Activated CD8-positive, alpha-beta T cell treated with anti-CD3 and anti-CD28 coated beads, Interleukin-2, amount 10 ng/mL, durations not matched to agents 7 days and 5 days (primary cell): ENCODE measurements at regions of chr17 and their contacts with region 1.

Region 1: DNA sequence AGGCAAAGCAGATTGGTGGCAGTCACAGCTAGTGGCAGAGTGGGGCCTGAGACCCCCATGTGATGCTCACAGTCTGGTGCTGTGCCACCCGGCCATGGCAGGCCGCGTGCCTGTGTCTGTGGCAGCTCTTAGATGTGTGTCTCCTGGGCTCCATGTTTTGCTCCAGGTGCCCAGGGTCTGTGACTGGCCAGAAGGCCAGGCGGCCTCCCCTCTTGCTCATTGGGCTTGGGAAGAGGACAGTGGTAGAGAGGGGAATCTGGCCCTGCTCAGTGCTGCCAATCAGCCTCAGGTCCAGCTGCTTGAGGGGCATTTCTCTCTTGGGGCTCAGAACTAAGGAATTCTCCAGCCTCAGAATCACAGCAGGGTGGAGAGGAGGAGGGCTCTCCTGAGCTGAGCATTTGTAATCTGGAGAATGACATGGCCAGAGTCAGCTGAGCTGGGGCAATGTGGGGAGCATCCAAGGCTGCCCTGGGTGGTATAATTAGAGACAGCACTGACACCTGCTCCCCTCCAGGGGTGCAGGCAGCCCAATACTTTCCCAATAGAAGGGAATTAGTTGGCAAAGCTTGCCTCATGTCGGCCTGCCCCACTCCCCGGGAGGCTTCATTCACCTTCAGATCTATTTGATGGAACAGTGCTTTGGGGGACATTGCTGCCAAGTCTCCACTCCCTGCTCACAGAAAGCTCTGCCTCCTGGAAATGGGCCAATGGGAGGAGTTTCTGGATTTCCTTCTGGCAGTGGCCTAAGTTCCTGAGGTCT is 2.7 kb upstream of the LASP1NB start:
- DNase-seq: peak; percentile 26
- ATAC-seq: no peak
- H3K4me3 Mint-ChIP-seq: no peak overlapping the region
- H3K27ac Mint-ChIP-seq: peak overlapping the region; percentile 62
- H3K4me1 Mint-ChIP-seq: peaks cover 50% of the 10 kb centered on the region
- H3K27me3 Mint-ChIP-seq: no peaks in the 10 kb centered on the region

Region 2: DNA sequence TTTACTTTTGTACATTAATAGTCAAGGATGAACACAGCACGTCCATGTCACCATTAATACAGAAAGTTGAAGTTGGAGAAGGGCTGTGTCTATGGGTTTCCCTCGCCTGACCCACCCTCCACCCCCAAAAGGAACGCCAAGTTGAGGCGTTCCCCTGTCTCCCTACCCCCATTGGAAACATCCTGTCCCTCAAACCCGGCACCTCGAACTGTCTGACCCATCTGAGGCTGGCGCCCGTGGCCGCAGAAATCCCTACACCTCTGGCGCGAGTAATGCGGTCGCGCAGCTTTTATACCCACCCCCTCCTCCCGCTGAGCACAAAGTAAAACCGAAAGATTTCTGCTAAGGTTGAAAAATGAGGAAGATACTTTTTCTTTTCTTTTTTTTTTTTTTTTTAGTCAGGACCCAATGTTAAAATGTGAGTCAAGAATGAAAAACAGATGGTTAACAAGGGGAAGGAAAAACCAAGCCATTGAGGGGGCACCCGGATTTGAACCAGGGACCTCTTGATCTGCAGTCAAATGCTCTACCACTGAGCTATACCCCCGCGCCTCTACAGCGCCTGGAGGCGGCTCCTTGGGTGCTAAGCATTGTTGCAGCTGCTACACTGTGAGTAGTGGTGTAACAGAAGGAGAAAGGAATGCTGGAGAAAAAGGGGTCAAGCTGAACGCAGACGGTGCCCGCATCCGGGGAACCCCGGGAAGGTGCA is 53.7 kb before region 1 on chr17:
- CTCF ChIA-PET with region 1: interaction called, 15 read pairs
- POLR2A ChIA-PET with region 1: interaction called, 8 read pairs
- DNase-seq: peak; percentile 90
- ATAC-seq: peak; percentile 54
- H3K4me3 Mint-ChIP-seq: peak overlapping the region; percentile 99
- H3K27ac Mint-ChIP-seq: peak overlapping the region; percentile 85
- H3K4me1 Mint-ChIP-seq: peaks cover 42% of the 10 kb centered on the region
- H3K27me3 Mint-ChIP-seq: no peaks in the 10 kb centered on the region

Region 3: DNA sequence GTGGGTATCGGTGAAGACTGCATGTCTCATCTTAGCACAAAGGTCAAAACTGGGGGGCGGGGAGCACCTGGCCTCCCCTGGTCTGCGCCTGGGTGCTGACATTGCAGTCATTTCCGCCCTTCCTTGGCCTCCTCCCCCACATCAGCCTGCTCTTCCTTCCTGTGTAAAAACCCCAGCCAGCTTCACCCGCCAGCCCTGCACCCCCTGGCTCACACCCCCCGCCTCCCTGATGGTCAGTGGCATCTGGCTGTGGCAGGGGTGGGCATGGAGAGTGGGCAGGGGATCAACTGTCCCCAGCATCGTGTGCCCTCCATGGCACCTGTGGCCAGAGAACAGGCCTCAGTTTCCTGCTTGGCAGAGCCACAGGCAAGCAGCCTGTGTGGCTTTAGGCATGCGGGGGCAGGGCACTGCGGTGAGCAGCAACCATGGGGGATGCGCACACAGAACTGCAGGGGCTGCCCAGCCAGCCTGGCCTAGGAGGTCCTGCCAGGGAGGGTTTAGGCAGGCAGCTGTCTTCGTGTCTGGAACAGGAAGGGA is 23.8 kb before region 1 on chr17:
- CTCF ChIA-PET with region 1: interaction called, 6 read pairs
- POLR2A ChIA-PET with region 1: interaction called, 33 read pairs
- DNase-seq: peak; percentile 89
- ATAC-seq: peak; percentile 79
- H3K4me3 Mint-ChIP-seq: peak overlapping the region; percentile 75
- H3K27ac Mint-ChIP-seq: peak overlapping the region; percentile 96
- H3K4me1 Mint-ChIP-seq: peaks cover 76% of the 10 kb centered on the region
- H3K27me3 Mint-ChIP-seq: no peaks in the 10 kb centered on the region

Region 4: DNA sequence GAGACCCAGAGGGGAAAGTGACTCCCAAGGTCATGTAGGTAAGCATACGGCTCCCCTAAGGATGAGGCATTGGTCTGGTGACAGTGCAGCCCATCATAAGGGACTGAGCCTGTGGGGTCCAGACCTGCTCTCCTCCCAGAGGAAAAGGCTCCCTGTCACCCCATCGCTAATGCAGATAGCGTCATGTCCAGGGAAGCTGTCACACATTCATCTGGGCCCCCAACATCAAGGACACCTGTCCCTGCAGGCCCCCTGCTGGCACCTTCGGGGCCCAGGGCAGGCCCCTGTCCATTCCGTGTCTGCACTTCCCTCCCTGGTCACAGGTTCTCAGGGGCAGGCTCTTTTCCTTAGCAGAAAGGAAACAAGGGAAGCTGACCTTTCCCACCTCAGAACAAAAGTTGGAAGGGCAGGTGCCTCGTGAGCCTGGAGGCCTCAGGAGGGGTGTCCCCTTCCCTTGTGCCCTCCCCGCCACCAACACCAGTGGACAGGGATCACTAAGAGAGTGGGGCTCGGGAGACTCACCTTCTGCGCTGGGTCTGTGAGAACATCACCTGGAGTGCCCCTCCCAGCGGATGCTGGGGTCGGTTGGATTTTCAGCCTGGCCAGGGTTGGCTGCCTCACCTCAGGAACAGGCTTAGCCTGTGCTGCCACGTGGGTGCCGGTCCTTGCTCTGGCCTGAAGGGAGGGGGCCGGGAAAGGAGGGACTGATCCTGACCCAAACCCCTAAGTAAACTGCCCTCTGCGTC is 14.6 kb before region 1 on chr17:
- CTCF ChIA-PET with region 1: interaction called, 13 read pairs
- POLR2A ChIA-PET with region 1: interaction called, 33 read pairs
- DNase-seq: no peak
- ATAC-seq: no peak
- H3K4me3 Mint-ChIP-seq: no peak overlapping the region
- H3K27ac Mint-ChIP-seq: peak overlapping the region; percentile 34
- H3K4me1 Mint-ChIP-seq: peaks cover 26% of the 10 kb centered on the region
- H3K27me3 Mint-ChIP-seq: no peaks in the 10 kb centered on the region

Region 5: DNA sequence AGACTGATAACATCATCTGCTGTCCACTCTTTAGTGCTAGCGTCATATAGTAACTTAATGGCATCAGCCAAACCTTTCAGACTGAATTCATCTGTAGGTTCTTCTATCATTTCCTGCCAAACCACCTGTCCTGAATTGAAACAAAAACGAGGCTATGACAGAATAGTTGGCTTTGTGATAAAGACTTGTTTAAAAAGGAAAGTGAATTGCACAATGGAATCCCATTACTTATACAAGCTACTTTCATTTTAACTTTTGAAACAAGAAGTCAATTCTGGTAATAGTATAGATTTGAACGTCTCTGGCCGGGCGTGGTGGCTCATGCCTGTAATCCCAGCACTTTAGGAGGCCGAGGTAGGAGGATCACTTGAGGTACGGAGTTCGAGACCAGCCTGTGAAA is 20.9 kb after region 1 on chr17:
- CTCF ChIA-PET with region 1: interaction called, 10 read pairs
- POLR2A ChIA-PET with region 1: interaction called, 8 read pairs
- DNase-seq: no peak
- ATAC-seq: no peak
- H3K4me3 Mint-ChIP-seq: no peak overlapping the region
- H3K27ac Mint-ChIP-seq: no peak overlapping the region
- H3K4me1 Mint-ChIP-seq: peaks cover 8% of the 10 kb centered on the region
- H3K27me3 Mint-ChIP-seq: peaks cover 5% of the 10 kb centered on the region

Region 6: DNA sequence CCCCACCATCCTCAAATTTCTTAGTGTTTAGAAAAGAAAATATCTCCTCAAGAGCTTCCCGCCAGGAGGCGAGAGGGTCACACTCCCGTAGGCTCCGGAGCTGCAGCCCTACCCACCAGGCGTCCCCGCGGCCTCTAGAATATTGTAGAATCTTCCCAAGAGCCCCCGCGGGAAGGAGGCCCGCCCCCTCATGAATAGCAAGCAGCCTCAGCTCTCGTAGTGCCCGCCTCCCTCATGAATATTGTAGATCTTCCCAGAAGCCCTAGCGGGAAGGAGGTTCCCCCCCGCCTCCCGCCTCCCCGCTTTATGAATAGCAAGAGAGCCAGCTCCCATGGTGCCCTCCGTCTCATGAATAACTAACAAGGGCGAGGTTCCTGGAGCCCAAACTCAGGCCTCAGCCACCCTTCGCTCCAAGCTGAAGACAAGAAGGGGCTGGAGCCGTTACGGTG is 44.6 kb after region 1 on chr17 and contains the start of gene FBXO47:
- CTCF ChIA-PET with region 1: interaction called, 11 read pairs
- POLR2A ChIA-PET with region 1: no interaction called
- DNase-seq: peak; percentile 91
- ATAC-seq: peak; percentile 99
- H3K4me3 Mint-ChIP-seq: peak within 1 kb of the TSS; percentile 77
- H3K27ac Mint-ChIP-seq: peak within 1 kb of the TSS; percentile 83
- H3K4me1 Mint-ChIP-seq: peaks cover 28% of the 10 kb centered on the region
- H3K27me3 Mint-ChIP-seq: peaks cover 4% of the 10 kb centered on the region
- total RNA-seq, gene FBXO47: not detected